HEK293 (cell line): ENCODE measurements at regions of chr19 and their contacts with region 1.

Region 1: GRCh38 chr19:35044317-35045117 is 3.0 kb downstream of the HPN start:
- H3K4me3 ChIP-seq: no peak overlapping the region
- H3K27ac ChIP-seq: no peak overlapping the region
- H3K4me1 ChIP-seq: peaks cover 5% of the 10 kb centered on the region; the same call in 1 of the 2 replicates
- CTCF ChIP-seq: peak; percentile 100

Region 2: DNA sequence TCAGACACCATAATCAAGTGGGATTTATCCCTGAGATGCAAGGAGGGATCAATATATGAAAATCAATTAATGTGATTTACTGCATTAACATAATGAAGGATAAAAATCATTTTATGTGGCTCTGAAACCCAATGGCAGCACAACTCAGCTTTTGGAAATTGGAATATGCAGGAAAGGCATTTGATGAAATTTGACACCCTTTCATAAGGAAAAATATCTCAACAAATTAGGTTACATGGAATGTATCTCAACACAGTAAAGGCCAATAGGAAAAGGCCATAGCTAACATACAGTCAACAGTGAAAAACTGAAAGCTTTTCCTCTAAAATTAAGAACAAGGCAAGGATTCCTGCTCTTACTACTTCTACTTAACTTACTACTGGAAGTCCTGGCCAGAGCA is 149.7 kb before region 1 on chr19:
- CTCF ChIA-PET with region 1: no interaction called
- POLR2A ChIA-PET with region 1: no interaction called
- H3K4me3 ChIP-seq: no peak overlapping the region
- H3K27ac ChIP-seq: no peak overlapping the region
- H3K4me1 ChIP-seq: no peaks in the 10 kb centered on the region
- CTCF ChIP-seq: no peak

Region 3: DNA sequence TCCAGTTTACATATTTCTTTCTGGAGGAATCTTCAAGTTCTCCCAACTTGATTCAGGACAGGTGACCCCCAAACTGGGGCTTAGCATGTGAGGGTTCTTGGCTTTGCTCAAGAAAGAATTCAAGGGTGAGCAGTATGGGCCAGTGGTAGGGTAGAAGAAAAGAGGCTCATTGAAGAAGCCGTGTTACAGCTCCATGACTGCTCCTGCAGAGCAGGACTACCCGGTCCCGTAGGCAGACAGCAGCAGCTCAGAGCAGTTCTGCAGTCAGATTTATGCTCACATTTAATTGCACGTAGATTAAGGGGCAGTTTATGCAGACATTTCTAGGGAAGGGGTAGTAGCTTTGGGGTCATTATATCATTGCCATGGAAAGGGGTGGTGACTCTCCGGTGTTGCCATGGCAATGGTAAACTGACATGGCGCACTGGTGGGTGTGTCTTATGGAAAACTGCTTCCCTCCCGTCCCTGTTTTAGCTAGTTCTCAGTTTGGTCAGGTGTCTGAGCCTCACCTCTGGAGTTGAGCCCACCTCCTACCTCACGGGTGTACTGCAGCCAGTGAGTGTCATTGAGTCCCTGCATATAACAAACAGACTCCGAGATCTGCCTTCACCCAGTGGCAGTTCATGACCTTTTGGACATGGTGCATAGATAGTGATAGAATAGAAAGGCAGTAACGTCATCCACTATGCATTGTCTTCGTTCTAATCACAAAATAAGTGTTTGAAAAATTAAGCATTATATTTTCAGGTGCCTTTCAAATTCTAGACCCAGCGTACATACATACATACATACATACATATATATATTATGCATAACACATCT is 64.5 kb before region 1 on chr19:
- CTCF ChIA-PET with region 1: interaction called, 18 read pairs
- POLR2A ChIA-PET with region 1: no interaction called
- H3K4me3 ChIP-seq: no peak overlapping the region
- H3K27ac ChIP-seq: no peak overlapping the region
- H3K4me1 ChIP-seq: no peaks in the 10 kb centered on the region
- CTCF ChIP-seq: no peak

Region 4: GRCh38 chr19:34999498-35000341 is 44.8 kb before region 1 on chr19 and contains the start of gene GRAMD1A:
- CTCF ChIA-PET with region 1: interaction called, 13 read pairs
- POLR2A ChIA-PET with region 1: interaction called, 5 read pairs
- H3K4me3 ChIP-seq: peak within 1 kb of the TSS; percentile 63
- H3K27ac ChIP-seq: peak within 1 kb of the TSS; percentile 98
- H3K4me1 ChIP-seq: peaks cover 35% of the 10 kb centered on the region
- CTCF ChIP-seq: no peak

Region 5: GRCh38 chr19:35055715-35056179 is 11.2 kb after region 1 on chr19:
- CTCF ChIA-PET with region 1: interaction called, 193 read pairs
- POLR2A ChIA-PET with region 1: interaction called, 4 read pairs
- H3K4me3 ChIP-seq: no peak overlapping the region
- H3K27ac ChIP-seq: no peak overlapping the region
- H3K4me1 ChIP-seq: peaks cover 7% of the 10 kb centered on the region; the same call in 1 of the 2 replicates
- CTCF ChIP-seq: peak; percentile 89

Region 6: DNA sequence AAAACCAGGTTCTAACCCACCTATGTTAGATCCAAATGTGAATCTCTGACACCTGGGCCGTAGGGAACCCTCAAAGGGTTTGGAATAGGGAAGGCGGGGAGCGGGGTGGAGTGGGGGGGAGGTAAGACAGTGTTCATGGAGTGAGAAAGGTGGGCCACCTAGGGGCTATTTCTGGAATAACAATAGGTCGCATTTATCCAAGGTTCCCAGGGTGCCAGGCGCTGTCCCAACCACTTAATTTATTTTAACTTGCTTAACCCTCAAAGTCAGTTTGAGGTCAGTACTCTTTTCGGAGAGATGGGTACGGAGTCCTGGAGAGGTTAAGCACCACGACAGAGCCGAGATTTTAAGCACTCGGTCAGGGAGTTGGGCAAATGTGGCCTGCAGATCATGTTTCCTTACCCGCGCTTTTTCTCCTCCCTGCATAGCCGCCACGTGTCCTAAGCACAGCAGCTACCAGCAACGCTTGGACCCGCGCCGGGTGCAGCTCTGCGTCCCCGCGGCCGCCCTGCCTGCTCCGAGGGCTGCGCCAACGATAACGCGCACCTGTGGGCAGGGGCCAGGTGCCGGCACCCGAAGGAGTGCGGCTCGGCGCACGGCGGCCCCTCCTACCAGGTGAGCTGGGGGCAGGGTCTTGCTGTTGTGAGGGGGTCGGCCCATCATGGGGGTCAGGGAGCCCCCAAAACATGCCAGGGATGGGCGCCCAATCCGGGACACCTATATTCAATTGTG is 46.2 kb after region 1 on chr19:
- CTCF ChIA-PET with region 1: interaction called, 60 read pairs
- POLR2A ChIA-PET with region 1: no interaction called
- H3K4me3 ChIP-seq: no peak overlapping the region
- H3K27ac ChIP-seq: no peak overlapping the region; the same call in 1 of the 2 replicates
- H3K4me1 ChIP-seq: peaks cover 7% of the 10 kb centered on the region
- CTCF ChIP-seq: peak; percentile 86